ENCODE measurements at regions of chr1 and their contacts with region 1.

Region 1: DNA sequence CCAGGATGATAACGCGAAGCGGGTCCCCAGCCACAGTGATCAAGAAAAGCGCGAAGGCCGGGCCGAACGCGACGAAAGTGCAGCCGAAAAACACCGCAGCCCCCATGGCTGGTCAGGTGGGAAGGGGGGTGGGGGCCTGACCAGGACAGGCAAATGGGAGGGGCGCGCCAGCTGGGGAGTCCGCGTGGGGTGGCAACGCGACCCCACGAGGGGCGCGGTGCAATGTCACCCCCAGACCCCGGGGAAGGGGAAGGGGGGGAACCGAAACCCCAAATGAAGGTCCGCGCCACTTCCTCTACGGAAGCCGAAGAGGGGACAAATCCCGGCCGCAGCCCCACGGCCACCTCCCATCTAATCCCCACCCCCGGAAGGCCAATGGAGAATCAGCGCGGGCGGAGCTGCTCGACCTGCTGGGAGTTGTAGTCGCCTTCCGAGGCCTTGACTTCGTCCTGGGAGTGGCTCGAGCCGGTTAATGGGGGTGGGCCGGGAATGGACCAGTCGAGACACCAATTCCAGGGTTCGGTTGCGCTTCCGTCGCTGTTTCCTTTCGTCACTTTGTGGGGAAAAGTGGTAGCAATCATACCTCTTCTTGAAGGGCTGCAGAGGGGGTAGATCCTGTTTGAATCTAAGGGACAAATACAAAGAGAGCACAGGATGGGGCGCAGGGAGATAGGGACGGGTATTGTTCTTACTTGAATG is at the start of gene APH1A:
- DNase-seq: peak; percentile 97
- CTCF ChIP-seq: no peak

Region 2: GRCh38 chr1:150281837-150282653 is 13.2 kb after region 1 on chr1 and contains the start of gene CIART:
- CTCF ChIA-PET with region 1: interaction called, 38 read pairs
- POLR2A ChIA-PET with region 1: no interaction called
- DNase-seq: peak; percentile 80
- CTCF ChIP-seq: no peak

Region 3: DNA sequence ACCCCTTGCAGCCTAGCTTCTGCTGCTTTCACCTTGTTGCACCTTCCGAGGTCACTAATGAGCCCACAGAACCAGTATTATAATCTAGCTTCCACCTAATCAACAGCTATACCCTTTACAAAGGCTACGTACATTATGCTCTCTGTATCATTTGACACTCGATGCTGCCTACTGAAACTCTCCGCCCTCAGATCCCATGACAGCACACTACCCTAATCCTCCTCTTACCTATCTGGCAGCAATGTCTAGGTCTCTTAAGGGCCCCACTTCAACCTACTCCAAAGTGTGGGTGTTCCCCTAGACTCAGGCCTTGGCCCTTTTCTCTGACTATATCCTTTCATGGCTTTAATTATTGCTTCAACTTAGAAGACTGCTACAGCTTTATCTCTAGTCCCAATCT is 20.0 kb after region 1 on chr1:
- CTCF ChIA-PET with region 1: interaction called, 16 read pairs
- POLR2A ChIA-PET with region 1: no interaction called
- DNase-seq: no peak
- CTCF ChIP-seq: no peak

Region 4: DNA sequence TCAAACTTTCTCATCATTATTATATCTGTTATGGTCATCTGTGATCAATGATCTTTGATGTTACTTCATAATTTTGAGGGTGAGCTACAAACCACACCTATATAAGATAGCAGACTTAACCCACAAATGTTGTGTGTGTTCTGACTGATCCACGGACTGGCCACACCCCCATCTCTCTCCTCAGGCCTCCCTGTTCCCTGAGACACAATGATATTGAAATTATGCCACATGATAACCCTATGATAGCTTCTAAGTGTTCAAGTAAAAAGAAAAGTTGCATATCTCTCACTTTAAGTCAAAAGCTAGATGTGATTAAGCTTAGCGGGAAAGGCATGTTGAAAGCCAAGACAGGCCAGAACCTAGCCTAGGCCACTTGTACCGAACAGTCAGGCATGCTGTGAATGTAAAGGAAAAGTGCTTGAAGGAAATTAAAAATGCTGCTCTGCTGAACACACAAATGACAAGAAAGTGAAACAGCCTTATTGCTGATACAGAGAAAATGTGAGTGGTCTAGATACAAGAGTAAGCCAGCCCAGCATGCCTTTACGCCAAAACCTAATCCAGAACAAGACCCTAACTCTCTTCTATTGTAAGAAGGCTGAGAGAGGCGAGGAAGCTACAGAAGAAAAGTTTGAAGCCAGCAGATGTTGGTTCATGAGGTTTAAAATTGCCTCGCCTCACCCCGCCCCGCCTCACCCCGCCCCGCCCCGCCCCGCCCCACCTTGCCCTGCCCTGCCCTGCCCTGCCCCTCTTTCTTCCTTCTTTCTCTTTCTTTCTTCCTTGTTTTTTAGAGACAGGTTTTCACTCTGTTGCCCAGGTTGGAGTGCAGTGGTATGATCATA is 480.2 kb after region 1 on chr1:
- CTCF ChIA-PET with region 1: no interaction called
- POLR2A ChIA-PET with region 1: no interaction called
- DNase-seq: no peak
- CTCF ChIP-seq: no peak

Measured in GM10248 (cell line).